ENCODE measurements at regions of chr9 and their contacts with region 1.

Region 1: GRCh38 chr9:120868676-120869359 is 8.2 kb downstream of the PHF19 start:
- DNase-seq: peak; percentile 77
- ATAC-seq: peak; percentile 96
- H3K4me3 ChIP-seq: peak overlapping the region; percentile 73
- H3K27ac ChIP-seq: peak overlapping the region; percentile 61
- H3K4me1 ChIP-seq: peaks cover 11% of the 10 kb centered on the region
- H3K27me3 ChIP-seq: no peaks in the 10 kb centered on the region
- CTCF ChIP-seq: peak; percentile 50 to 65 (median 64)
- EP300 ChIP-seq: no peak
- POLR2A ChIP-seq: peak; percentile 80
- RAD21 ChIP-seq: peak; percentile 43

Region 2: DNA sequence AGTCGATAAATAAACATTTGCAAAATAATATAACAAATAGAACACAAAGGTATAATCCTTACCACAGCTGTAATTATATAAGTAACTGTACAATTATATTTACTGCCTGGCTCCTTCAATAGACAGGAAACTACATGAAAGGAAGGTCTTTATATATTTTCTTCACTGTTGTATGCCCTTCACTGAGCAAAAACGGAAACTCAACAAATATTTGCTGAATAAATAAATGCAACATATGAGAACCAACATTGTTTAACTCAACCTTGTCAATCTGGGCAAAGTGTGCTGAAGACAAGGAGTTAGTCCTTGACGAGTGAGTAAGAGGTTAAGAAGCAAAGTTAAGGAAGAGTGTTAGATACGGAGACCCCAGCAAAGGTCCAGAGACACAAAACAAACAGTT is 48.7 kb before region 1 on chr9:
- CTCF ChIA-PET with region 1: no interaction called
- POLR2A ChIA-PET with region 1: no interaction called
- RAD21 ChIA-PET with region 1: no interaction called
- SMC1A ChIA-PET with region 1: no interaction called
- in situ Hi-C with region 1: no loop called
- intact Hi-C with region 1: no loop called
- DNase-seq: no peak
- ATAC-seq: no peak
- H3K4me3 ChIP-seq: no peak overlapping the region
- H3K27ac ChIP-seq: no peak overlapping the region
- H3K4me1 ChIP-seq: no peaks in the 10 kb centered on the region
- H3K27me3 ChIP-seq: no peaks in the 10 kb centered on the region
- CTCF ChIP-seq: no peak
- EP300 ChIP-seq: no peak
- POLR2A ChIP-seq: no peak
- RAD21 ChIP-seq: no peak

Region 3: DNA sequence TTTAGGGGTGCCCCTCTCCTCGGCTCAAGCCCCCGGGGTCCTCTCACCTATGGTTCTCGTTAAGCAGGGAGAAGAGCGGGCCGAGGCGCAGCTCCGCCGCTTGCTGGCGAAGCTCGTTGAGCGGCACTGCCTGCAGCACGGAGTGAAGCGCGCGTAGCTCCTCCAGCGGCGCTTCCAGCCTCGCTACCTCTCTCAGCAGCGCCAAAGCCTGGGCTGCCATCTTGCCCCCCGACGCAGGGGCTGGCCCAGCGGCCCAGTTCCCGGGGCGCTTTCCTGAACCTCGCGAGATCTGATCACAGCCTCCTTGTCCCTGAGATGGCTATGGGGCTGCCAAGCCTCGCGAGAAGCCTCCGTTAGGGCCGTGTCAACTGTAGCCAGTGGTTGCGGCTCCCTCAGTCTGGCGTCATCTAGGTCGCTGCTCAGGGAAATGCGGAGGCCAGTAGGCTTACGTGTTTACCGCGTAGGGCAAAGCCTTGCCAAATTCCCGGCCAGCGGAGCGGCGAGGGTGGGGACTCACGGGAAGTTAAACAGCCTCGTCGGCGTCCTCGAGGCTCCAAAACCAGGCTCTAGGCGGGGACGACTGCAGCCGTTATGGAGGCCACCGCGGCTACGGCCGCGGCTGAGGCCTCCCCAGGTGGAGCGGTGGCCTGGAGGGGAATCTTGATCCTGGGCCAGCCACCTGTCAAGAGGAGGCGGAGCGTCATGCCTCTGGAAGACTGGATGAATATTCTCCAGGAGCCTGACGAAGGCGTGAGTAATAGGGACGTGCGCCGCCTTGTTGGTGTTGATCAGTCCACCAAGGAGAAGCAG is 25.9 kb before region 1 on chr9 and contains the start of gene PSMD5:
- CTCF ChIA-PET with region 1: no interaction called
- POLR2A ChIA-PET with region 1: interaction called, 3 read pairs
- RAD21 ChIA-PET with region 1: no interaction called
- SMC1A ChIA-PET with region 1: no interaction called
- in situ Hi-C with region 1: no loop called
- intact Hi-C with region 1: loop called (anchors 2 kb)
- DNase-seq: peak; percentile 86
- ATAC-seq: peak; percentile 97
- H3K4me3 ChIP-seq: peak within 1 kb of the TSS; percentile 89
- H3K27ac ChIP-seq: peak within 1 kb of the TSS; percentile 94
- H3K4me1 ChIP-seq: peaks cover 6% of the 10 kb centered on the region; the same call in 1 of the 2 replicates
- H3K27me3 ChIP-seq: no peaks in the 10 kb centered on the region
- CTCF ChIP-seq: no peak
- EP300 ChIP-seq: no peak
- POLR2A ChIP-seq: peak; percentile 99
- RAD21 ChIP-seq: no peak
- polyA plus RNA-seq, gene PSMD5: 8.8 to 11.4 TPM

Region 4: DNA sequence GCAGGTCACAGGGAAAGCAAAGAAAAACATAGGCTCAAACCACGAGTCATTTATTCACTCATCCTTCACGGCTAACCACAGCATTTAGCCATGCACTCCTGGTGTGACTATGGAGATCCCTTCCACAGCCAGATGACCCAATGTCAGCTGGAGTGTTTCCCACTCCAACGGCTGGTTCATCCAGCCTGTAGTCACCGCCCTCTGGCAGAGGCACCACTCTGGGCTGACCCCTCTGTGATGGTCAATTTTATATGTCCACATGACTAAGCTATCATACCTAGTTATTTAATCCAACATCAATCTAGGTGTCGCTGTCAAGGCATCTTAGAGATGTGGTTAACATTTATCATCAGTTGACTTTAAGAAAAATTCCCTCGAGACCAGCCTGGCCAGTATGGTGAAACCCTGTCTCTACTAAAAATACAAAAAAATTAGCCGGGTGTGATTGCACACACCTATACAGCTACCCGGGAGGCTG is 17.7 kb after region 1 on chr9:
- CTCF ChIA-PET with region 1: interaction called, 14 read pairs
- POLR2A ChIA-PET with region 1: interaction called, 75 read pairs
- RAD21 ChIA-PET with region 1: interaction called, 3 read pairs
- SMC1A ChIA-PET with region 1: interaction called, 4 read pairs
- in situ Hi-C with region 1: no loop called
- intact Hi-C with region 1: no loop called
- DNase-seq: no peak
- ATAC-seq: peak; percentile 49
- H3K4me3 ChIP-seq: no peak overlapping the region
- H3K27ac ChIP-seq: no peak overlapping the region
- H3K4me1 ChIP-seq: peaks cover 26% of the 10 kb centered on the region
- H3K27me3 ChIP-seq: no peaks in the 10 kb centered on the region
- CTCF ChIP-seq: no peak; a peak in 1 of 6 replicates
- EP300 ChIP-seq: no peak
- POLR2A ChIP-seq: no peak
- RAD21 ChIP-seq: no peak

Region 5: DNA sequence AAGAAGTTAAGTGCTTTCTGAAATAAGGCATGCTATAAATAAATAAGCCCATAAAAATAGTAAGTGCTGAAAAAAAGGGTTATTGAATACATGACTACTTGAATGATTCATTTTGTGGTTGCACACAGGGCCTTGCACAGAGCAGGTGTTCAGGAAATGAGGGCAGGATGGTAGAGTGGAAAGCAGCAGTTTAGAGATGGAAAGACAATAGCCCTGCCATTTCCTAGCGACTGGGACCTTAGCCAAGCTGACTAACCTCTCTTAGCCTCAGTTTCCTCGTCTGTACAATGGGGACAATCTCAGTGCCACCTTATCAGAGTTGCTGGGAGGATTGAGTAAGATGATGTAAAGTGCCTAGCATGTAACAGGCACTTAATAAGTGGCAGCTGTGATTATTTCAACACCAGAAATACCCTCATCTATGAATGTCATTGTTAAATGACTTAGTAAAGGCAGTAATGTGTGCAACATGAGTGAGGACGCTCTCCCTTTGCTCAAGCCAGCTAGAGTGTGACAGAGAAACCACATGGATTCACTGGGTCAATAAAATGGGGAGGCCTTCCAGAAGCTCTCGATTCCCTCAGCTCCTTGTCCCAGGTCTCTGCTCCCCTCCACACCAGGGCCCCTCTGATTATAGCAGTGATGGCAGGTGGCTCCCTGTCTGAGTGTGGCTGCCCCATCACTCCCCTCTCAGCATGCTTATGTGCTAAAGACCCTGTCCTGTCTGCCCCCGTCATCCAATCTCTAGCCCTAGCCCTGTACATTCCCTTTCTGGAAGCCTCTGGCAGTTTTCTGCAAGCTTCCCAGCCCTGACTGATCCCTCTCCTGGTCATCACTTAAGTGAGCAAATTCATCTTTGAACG is 24.2 kb after region 1 on chr9:
- CTCF ChIA-PET with region 1: interaction called, 9 read pairs
- POLR2A ChIA-PET with region 1: interaction called, 75 read pairs
- RAD21 ChIA-PET with region 1: interaction called, 6 read pairs
- SMC1A ChIA-PET with region 1: interaction called, 14 read pairs
- in situ Hi-C with region 1: no loop called
- intact Hi-C with region 1: no loop called
- DNase-seq: no peak
- ATAC-seq: peak; percentile 80
- H3K4me3 ChIP-seq: no peak overlapping the region
- H3K27ac ChIP-seq: peak overlapping the region; percentile 94
- H3K4me1 ChIP-seq: peaks cover 62% of the 10 kb centered on the region
- H3K27me3 ChIP-seq: no peaks in the 10 kb centered on the region
- CTCF ChIP-seq: no peak
- EP300 ChIP-seq: peak; percentile 91 to 95
- POLR2A ChIP-seq: peak; percentile 62
- RAD21 ChIP-seq: no peak

Region 6: DNA sequence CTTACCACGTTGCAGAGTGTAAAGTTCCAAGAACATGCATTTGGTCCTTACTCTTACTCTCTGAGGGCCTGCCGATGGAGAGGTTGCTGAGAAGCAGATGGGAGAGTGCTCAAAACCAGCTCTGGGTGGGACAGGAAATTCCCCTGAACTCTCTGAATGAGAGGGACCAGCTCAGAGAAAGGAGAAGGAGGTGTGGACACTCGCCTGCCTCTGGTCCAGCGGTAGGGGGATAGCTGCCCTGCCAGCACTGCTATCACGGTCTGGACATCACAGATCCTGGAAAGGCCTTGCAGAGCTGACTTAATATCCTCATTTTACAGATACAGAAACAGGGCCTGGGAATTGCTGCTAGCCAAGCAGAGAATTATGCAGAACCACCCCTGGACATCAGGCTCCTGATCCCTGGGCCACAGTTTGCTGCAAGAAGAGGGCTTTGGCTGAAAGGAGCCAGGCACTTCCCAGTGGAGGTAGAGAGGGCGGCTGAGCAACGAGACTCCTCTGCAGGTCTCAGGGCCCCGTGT is 52.9 kb after region 1 on chr9:
- CTCF ChIA-PET with region 1: interaction called, 30 read pairs
- POLR2A ChIA-PET with region 1: interaction called, 8 read pairs
- RAD21 ChIA-PET with region 1: interaction called, 15 read pairs
- SMC1A ChIA-PET with region 1: interaction called, 19 read pairs
- in situ Hi-C with region 1: no loop called
- intact Hi-C with region 1: no loop called
- DNase-seq: no peak
- ATAC-seq: peak; percentile 12
- H3K4me3 ChIP-seq: peak overlapping the region; percentile 88
- H3K27ac ChIP-seq: peak overlapping the region; percentile 99
- H3K4me1 ChIP-seq: peaks cover 37% of the 10 kb centered on the region
- H3K27me3 ChIP-seq: no peaks in the 10 kb centered on the region
- CTCF ChIP-seq: no peak
- EP300 ChIP-seq: no peak
- POLR2A ChIP-seq: peak; percentile 73
- RAD21 ChIP-seq: no peak

Region 7: GRCh38 chr9:120936011-120936763 is 67.4 kb after region 1 on chr9:
- CTCF ChIA-PET with region 1: interaction called, 70 read pairs
- POLR2A ChIA-PET with region 1: interaction called, 6 read pairs
- RAD21 ChIA-PET with region 1: interaction called, 34 read pairs
- SMC1A ChIA-PET with region 1: interaction called, 57 read pairs
- in situ Hi-C with region 1: loop called (anchors 5 kb)
- intact Hi-C with region 1: loop called (anchors 2 kb)
- DNase-seq: peak; percentile 68
- ATAC-seq: peak; percentile 69
- H3K4me3 ChIP-seq: peak overlapping the region; percentile 19; the same call in 1 of the 2 replicates
- H3K27ac ChIP-seq: peak overlapping the region; percentile 96
- H3K4me1 ChIP-seq: peaks cover 47% of the 10 kb centered on the region
- H3K27me3 ChIP-seq: no peaks in the 10 kb centered on the region
- CTCF ChIP-seq: peak; percentile 90 to 96 (median 90)
- EP300 ChIP-seq: no peak
- POLR2A ChIP-seq: no peak
- RAD21 ChIP-seq: peak; percentile 97

Region 8: DNA sequence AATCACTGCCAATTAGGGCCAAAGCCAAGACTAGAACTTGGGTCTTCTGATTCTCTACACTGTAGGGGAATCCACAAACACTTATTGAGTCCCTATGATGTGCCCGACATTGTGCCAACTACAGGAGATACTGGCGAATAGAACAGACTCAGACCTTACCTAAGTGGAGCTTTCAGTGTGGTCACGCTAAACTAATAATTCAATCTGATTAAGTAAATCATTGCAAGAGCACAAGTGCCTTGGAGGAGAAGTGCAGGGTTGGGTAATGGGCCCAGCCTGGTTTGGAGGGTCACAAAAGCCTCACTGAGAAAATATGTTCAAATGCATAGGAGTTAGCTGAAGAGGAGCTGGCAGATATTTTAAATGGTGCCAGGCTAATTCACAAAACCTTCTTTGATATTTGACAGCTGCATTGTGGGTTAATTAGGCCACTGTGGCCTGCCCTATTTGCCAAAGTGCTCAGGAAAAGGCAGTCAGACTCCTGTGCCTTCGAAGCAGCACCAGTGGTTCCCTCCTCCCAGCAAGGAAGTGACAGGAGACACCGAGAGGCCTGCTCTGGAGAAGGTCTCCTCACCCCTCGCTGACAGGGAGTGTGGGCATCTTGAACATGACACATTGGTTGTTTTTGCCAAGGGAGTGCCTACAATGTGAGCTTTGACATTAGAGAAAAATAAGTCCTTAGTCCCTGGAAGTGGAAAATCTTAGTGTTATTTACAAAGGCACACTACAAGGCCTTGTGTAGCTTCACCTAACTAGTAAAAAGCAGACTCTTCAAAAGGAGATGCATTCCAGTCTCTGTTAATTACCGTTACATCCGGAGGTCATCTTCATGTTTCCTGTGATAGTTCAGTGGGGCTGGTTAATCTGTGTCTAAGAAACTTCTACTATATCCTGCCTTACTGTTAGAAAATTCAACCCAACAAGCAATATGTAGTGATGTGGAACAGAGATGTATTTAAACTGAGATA is 81.9 kb after region 1 on chr9:
- CTCF ChIA-PET with region 1: no interaction called
- POLR2A ChIA-PET with region 1: no interaction called
- RAD21 ChIA-PET with region 1: no interaction called
- SMC1A ChIA-PET with region 1: no interaction called
- in situ Hi-C with region 1: no loop called
- intact Hi-C with region 1: no loop called
- DNase-seq: no peak
- ATAC-seq: no peak; the same call in 2 of the 3 replicates
- H3K4me3 ChIP-seq: no peak overlapping the region
- H3K27ac ChIP-seq: no peak overlapping the region
- H3K4me1 ChIP-seq: no peaks in the 10 kb centered on the region
- H3K27me3 ChIP-seq: no peaks in the 10 kb centered on the region
- CTCF ChIP-seq: no peak
- EP300 ChIP-seq: no peak
- POLR2A ChIP-seq: no peak
- RAD21 ChIP-seq: no peak